ENCODE measurements at regions of chr12 and their contacts with region 1.

Region 1: GRCh38 chr12:53543539-53543938 is 36.3 kb upstream of the NPFF start:
- ATAC-seq: peak; percentile 66 to 96 (median 90)
- H3K4me3 ChIP-seq: no peak overlapping the region
- H3K27ac ChIP-seq: no peak overlapping the region
- H3K4me1 ChIP-seq: peaks cover 7 to 8% of the 10 kb centered on the region in 2 donors

Region 2: DNA sequence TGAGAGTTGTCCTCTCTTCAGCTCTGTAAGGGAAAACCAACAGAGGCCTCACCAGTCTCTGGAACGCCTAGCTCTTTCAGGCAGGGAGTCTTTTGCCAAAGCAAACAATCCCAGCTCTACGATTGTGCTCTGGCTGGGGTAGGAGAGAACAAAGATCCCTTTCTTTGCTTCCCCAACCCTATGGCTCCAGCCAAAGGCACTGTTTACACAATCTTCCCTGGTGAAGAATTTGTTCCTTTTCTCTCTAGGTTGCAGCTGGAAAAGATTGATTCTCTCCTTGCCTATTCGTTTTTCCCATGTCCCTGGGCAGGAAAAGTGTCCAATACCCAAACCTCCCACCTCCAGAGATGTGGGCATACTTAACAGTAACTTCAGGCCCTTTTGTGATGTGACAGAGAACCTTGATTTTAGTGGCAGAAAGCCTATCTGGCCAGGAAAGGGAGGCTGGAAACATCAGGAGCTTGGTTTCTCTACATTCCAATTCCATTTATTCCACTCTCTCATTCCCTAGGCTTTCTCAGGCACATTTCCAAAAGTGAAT is 115.5 kb after region 1 on chr12:
- in situ Hi-C with region 1: loop called in 2 of 9 experiments (anchors 25 kb)
- ATAC-seq: peak in 7 of 8 experiments; percentile 10 to 97 (median 95)
- H3K4me3 ChIP-seq: no peak overlapping the region
- H3K27ac ChIP-seq: peak overlapping the region; percentile 22 to 28
- H3K4me1 ChIP-seq: peaks cover 15 to 19% of the 10 kb centered on the region in 2 donors

Region 3: DNA sequence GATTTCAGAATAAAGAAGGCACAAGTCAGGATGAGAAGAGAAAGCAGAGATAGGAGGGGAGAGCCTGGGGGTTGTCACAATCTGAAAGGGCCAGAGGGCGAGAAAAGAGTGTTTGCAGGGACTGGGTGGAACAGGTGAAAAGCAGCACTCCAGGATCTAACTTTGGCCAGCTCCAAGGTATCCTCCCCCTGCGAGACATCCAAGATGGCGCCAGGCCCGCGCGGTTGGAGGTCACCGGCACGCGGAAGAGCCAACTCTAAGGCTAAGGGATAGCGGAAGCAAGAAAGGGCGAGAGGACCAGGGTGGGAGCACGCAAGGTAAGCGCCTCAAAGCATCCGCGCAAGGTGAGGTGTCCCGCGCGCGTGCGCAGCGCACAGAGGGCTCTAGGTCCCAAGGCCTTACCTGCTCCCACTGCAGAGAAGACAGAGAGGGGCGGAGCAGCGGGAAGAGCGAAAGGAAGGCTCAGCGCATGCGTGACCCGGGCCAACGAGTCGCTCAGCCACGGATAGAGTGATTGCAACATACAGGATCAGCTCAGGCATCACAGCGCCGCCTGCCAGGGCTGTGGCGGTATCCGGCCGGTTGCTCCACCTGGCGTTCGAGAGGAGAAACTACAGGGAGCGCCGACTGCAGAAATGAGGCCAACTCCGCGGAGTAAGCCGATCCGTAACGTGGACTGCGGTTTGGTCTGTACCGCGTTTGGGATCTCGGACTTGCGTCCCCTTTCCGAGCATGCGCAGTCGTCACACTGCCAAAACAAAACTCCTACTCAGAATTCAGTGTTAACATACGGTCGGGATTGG is 132.3 kb after region 1 on chr12 and contains the start of gene ATP5MC2:
- in situ Hi-C with region 1: loop called in 4 of 9 experiments (anchors 10 to 25 kb)
- ATAC-seq: peak; percentile 86 to 96 (median 91)
- H3K4me3 ChIP-seq: peak within 1 kb of the TSS; percentile 48 to 83 (median 70)
- H3K27ac ChIP-seq: peak within 1 kb of the TSS; percentile 93 to 98
- H3K4me1 ChIP-seq: peaks cover 25 to 38% of the 10 kb centered on the region in 2 donors
- total RNA-seq, gene ATP5MC2: 318 to 563 (median 434) TPM

Measured in motor neuron (in vitro differentiated cells).